ENCODE measurements at regions of chr9 and their contacts with region 1.

Region 1: GRCh38 chr9:22037954-22038690 is 29.0 kb upstream of the CDKN2B start:
- DNase-seq: no peak
- ATAC-seq: no peak
- H3K4me3 Mint-ChIP-seq: no peak overlapping the region
- H3K27ac Mint-ChIP-seq: no peak overlapping the region
- H3K4me1 Mint-ChIP-seq: peaks cover 5% of the 10 kb centered on the region
- H3K27me3 Mint-ChIP-seq: peaks cover 14% of the 10 kb centered on the region

Region 2: DNA sequence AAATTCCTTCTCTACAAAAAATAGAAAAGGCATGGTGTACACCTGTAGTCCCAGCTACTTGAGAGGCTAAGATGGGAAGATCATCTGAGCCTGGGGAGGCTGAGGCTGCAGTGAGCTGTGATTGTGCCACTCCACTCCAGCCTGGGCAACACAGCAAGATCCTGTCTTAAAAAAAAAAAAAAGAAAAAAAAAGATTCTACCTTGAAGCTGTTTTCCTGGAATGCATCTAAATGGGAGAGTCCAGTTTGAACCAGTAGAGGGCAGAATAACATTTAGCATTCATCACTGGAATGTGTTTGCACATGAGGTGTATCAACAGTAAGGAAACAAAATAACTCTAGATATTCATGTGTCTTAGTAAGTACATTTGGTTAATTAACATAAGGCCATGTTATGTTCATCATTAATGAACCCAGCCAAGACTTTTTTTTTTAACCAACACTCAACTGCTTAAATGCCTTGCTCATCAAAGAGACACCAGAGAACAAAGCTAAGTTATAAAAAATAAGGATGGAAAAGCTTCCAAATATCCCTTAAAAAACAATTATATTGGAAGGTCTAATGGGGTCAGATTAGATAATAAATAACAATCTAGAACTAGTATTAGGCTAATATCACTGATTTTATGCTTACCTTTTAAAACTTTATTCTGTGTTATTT is 572.1 kb before region 1 on chr9:
- CTCF ChIA-PET with region 1: no interaction called
- POLR2A ChIA-PET with region 1: no interaction called
- intact Hi-C with region 1: loop called in 1 of 2 experiments (anchors 10 kb)
- DNase-seq: no peak
- ATAC-seq: peak; percentile 78
- H3K4me3 Mint-ChIP-seq: no peak overlapping the region
- H3K27ac Mint-ChIP-seq: no peak overlapping the region
- H3K4me1 Mint-ChIP-seq: no peaks in the 10 kb centered on the region
- H3K27me3 Mint-ChIP-seq: peaks cover 2% of the 10 kb centered on the region

Region 3: DNA sequence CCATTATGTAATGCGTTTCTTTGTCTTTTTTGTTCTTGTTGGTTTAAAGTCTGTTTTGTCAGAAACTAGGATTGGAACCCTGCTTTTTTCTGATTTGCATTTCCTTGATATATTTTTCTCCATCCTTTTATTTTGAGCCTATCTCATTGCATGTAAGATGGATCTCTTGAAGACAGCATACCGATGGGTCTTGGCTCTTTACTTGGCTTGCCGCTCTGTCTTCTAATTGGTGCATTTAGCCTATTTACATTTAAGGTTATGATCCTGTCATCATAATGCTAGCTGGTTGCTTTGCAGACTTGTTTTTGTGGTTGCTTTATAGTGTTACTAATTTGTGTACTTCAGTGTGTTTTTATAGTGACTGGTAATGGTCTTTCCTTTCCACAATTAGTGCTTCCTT is 15.7 kb before region 1 on chr9:
- CTCF ChIA-PET with region 1: interaction called, 10 read pairs
- POLR2A ChIA-PET with region 1: no interaction called
- intact Hi-C with region 1: no loop called
- DNase-seq: no peak
- ATAC-seq: no peak
- H3K4me3 Mint-ChIP-seq: no peak overlapping the region
- H3K27ac Mint-ChIP-seq: no peak overlapping the region
- H3K4me1 Mint-ChIP-seq: no peaks in the 10 kb centered on the region
- H3K27me3 Mint-ChIP-seq: peaks cover 47% of the 10 kb centered on the region

Region 4: DNA sequence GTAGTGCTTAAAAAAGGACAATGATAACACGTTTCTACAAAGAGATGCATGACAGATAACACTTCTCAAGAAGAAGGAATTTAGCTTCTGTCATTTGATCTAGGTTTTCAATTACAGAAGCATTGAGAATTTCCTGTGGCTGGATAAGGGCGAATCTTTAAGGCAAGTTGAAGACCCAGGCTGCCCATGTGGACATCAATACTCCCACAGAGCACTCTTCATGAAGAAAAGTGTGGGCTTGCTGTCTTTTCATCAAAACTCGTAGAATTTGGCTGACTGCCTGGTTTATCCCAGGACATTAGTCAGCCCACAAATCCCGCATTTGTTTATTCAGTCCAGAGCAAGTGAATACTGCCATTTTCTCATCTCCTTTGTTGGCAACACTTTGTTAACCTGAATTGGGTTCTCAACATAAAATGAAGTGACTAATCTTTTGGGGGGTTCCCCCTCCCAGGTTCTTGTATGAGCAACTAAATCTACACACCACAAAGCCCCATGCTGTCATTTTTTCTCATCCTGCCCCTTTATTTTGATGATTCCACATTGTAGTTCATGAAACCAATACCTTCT is 14.3 kb after region 1 on chr9:
- CTCF ChIA-PET with region 1: interaction called, 18 read pairs
- POLR2A ChIA-PET with region 1: no interaction called
- intact Hi-C with region 1: no loop called
- DNase-seq: peak; percentile 57
- ATAC-seq: peak; percentile 96
- H3K4me3 Mint-ChIP-seq: no peak overlapping the region
- H3K27ac Mint-ChIP-seq: no peak overlapping the region
- H3K4me1 Mint-ChIP-seq: peaks cover 30% of the 10 kb centered on the region
- H3K27me3 Mint-ChIP-seq: peaks cover 13% of the 10 kb centered on the region

Region 5: DNA sequence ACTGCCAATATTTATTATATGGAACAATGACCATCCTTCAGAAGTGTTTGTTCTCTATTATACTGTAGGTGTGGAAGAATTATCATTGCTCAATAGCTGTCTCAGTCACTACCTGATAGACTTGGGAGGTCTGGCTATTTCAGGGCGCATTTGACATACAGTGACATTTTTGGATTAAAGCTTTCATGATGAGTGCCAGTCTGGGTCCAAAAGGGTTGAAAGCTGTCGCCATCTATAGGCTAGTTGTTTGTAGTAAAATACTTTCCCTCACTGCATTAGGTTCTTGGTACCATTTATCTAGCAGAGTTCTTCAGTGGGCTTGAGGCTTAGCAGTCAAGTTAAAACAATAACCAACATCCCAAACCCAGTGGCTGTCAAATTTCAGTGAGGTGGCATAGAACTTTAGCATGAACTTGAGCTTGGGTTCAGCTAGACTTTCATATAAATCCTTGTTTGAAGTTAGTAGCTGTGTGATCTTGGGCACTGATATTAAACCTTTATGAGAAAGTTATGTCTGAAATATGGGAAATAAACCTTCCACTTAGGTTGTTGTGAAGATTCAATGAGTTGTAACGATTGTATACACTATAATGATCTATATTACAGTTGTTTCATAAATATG is 81.5 kb after region 1 on chr9:
- CTCF ChIA-PET with region 1: interaction called, 3 read pairs
- POLR2A ChIA-PET with region 1: no interaction called
- intact Hi-C with region 1: loop called in 1 of 2 experiments (anchors 5 kb)
- DNase-seq: peak; percentile 15
- ATAC-seq: peak; percentile 42
- H3K4me3 Mint-ChIP-seq: no peak overlapping the region
- H3K27ac Mint-ChIP-seq: no peak overlapping the region
- H3K4me1 Mint-ChIP-seq: no peaks in the 10 kb centered on the region
- H3K27me3 Mint-ChIP-seq: peaks cover 30% of the 10 kb centered on the region

Region 6: GRCh38 chr9:22238809-22239684 is 200.9 kb after region 1 on chr9:
- CTCF ChIA-PET with region 1: interaction called, 3 read pairs
- POLR2A ChIA-PET with region 1: no interaction called
- intact Hi-C with region 1: loop called in 1 of 2 experiments (anchors 5 kb)
- DNase-seq: no peak
- ATAC-seq: peak; percentile 34
- H3K4me3 Mint-ChIP-seq: no peak overlapping the region
- H3K27ac Mint-ChIP-seq: no peak overlapping the region
- H3K4me1 Mint-ChIP-seq: peaks cover 37% of the 10 kb centered on the region
- H3K27me3 Mint-ChIP-seq: peaks cover 19% of the 10 kb centered on the region

Region 7: DNA sequence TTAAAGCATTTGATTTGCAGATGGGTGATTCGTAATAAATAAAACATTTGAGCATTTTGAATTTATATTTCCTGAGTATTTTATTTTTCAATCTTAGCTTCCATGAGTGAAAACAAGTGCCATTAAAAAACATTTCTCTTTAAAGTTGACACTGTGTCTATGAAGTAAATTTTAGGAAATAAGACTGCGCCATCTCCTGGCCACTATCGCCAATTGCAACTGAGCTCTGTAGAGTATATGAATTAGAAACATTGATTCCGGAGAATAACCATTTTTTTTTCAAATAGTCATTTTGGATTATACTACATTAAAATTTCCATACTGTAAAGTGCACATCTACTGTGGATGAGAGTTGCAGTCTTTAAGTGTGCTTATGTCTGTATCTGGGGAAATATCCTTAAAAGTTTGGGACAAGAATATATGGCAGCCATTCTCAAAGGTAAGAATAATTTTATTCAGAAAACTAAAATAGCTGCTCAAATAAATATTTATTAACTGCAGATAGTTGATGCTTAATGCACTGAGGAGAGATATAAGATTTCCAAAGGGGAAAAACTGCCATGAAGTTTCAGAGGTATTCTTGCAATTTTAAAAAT is 414.4 kb after region 1 on chr9:
- CTCF ChIA-PET with region 1: no interaction called
- POLR2A ChIA-PET with region 1: no interaction called
- intact Hi-C with region 1: loop called in 1 of 2 experiments (anchors 10 kb)
- DNase-seq: peak; percentile 68
- ATAC-seq: no peak
- H3K4me3 Mint-ChIP-seq: no peak overlapping the region
- H3K27ac Mint-ChIP-seq: no peak overlapping the region
- H3K4me1 Mint-ChIP-seq: peaks cover 3% of the 10 kb centered on the region
- H3K27me3 Mint-ChIP-seq: peaks cover 37% of the 10 kb centered on the region